GM10248 (cell line): ENCODE measurements at regions of chr5 and their contacts with region 1.

Region 1: GRCh38 chr5:132064738-132065331 is 4.4 kb downstream of the IL3 start:
- DNase-seq: peak; percentile 85
- CTCF ChIP-seq: peak; percentile 91

Region 2: GRCh38 chr5:131521252-131521651 is 543.6 kb before region 1 on chr5:
- CTCF ChIA-PET with region 1: no interaction called
- POLR2A ChIA-PET with region 1: no interaction called
- DNase-seq: no peak
- CTCF ChIP-seq: no peak

Region 3: GRCh38 chr5:131957721-131958441 is 107.0 kb before region 1 on chr5:
- CTCF ChIA-PET with region 1: no interaction called
- POLR2A ChIA-PET with region 1: no interaction called
- DNase-seq: no peak
- CTCF ChIP-seq: no peak

Region 4: DNA sequence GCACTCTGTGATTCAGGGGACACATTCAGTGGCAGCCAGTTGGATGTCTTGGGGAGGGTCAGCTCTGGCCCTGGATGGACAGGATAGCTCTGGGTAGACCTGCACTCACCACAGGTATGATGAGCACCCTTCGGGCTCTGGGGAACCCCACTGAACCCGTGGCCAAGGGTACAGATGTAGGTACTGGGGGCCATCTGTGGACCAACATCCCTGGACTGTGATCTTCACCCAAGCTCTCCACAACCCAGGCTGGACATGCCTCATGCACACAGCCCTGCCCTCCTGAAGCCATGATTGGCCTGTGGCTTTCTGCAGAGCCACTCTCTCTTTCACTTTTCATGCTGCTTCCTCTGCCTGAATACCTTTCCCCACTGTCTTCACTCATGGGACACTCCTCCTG is 37.8 kb before region 1 on chr5:
- CTCF ChIA-PET with region 1: interaction called, 10 read pairs
- POLR2A ChIA-PET with region 1: no interaction called
- DNase-seq: no peak
- CTCF ChIP-seq: no peak

Region 5: DNA sequence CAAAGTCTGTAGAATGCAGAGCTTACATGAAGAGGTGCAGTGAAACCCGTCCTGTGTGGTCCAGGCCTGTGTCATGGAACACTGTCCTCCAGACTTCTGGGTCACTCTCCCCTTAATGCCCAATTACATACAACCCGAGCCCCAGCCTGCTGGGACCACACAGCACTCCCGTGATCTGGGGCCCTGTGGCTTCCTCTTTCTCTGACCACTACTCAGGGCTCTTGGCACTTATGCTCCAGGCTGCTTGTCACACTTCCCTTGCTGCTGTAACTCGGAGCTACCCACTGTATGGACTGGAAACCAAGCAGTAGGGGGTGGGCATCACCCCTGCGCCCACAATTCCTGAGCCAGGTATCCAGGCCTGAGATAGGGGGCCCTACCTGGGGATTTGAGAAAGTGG is 14.7 kb before region 1 on chr5:
- CTCF ChIA-PET with region 1: interaction called, 48 read pairs
- POLR2A ChIA-PET with region 1: no interaction called
- DNase-seq: no peak
- CTCF ChIP-seq: no peak

Region 6: GRCh38 chr5:132094393-132095076 is 29.7 kb after region 1 on chr5:
- CTCF ChIA-PET with region 1: interaction called, 105 read pairs
- POLR2A ChIA-PET with region 1: no interaction called
- DNase-seq: no peak
- CTCF ChIP-seq: no peak

Region 7: GRCh38 chr5:132190161-132190817 is 125.5 kb after region 1 on chr5:
- CTCF ChIA-PET with region 1: interaction called, 20 read pairs
- POLR2A ChIA-PET with region 1: no interaction called
- DNase-seq: peak; percentile 63
- CTCF ChIP-seq: peak; percentile 52

Region 8: GRCh38 chr5:132272311-132273210 is 207.7 kb after region 1 on chr5:
- CTCF ChIA-PET with region 1: interaction called, 10 read pairs
- POLR2A ChIA-PET with region 1: no interaction called
- DNase-seq: peak; percentile 70
- CTCF ChIP-seq: peak; percentile 71

Region 9: DNA sequence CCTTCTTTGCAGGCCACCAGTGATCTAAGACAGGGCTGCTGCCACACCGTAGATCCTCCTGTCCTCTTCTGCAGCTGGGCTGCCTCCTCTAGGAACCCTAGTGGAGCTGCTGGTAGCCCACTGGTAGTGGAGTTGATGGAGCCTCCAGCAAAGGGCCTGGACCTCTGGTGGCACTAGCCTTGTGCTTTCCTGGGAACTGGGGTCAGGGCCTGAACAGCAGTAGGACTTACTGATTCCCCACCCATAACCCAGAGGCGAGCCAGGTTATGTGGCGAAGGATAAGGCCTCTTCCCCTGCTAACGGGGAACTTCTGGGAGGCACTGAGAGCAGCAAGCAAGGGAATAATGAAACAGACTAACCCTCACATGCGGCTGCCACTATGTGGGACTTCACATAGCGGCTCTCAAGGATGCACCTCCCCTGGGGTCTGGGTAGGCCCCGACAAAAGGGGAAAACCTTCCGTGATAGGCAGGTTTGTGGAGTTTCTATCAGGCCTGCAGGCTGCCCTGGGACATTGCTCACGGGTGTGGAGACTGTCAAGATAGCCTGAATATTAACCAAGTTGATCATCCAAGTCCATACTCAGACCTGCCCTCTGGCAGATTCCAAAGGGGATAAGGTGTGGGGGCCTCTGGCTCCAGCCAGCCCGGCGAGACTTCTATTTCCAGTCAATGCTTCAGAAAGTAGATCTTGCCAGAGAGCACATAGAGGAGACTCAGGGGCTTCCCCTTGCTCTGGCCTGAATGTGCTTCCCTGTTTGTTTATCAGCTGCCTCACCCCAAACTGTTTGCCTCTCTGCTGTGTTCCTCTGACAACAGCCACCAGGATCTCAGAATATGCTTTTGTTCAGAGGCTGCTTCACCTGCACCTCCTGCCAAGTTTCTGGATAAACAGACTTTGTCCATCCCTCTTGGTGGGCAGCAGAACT is 236.8 kb after region 1 on chr5:
- CTCF ChIA-PET with region 1: no interaction called
- POLR2A ChIA-PET with region 1: no interaction called
- DNase-seq: no peak
- CTCF ChIP-seq: no peak